ENCODE measurements at regions of chr5 and their contacts with region 1.

Region 1: GRCh38 chr5:56909294-56910209 is at the start of gene SETD9:
- DNase-seq: peak; percentile 90 to 99
- H3K4me3 ChIP-seq: peak within 1 kb of the TSS; percentile 63 to 92
- H3K27ac ChIP-seq: peak within 1 kb of the TSS; percentile 90 to 99
- H3K4me1 ChIP-seq: peaks cover 2 to 6% of the 10 kb centered on the region in 2 donors
- H3K27me3 ChIP-seq: no peaks in the 10 kb centered on the region
- CTCF ChIP-seq: no peak
- total RNA-seq, gene SETD9: 16.8 TPM

Region 2: DNA sequence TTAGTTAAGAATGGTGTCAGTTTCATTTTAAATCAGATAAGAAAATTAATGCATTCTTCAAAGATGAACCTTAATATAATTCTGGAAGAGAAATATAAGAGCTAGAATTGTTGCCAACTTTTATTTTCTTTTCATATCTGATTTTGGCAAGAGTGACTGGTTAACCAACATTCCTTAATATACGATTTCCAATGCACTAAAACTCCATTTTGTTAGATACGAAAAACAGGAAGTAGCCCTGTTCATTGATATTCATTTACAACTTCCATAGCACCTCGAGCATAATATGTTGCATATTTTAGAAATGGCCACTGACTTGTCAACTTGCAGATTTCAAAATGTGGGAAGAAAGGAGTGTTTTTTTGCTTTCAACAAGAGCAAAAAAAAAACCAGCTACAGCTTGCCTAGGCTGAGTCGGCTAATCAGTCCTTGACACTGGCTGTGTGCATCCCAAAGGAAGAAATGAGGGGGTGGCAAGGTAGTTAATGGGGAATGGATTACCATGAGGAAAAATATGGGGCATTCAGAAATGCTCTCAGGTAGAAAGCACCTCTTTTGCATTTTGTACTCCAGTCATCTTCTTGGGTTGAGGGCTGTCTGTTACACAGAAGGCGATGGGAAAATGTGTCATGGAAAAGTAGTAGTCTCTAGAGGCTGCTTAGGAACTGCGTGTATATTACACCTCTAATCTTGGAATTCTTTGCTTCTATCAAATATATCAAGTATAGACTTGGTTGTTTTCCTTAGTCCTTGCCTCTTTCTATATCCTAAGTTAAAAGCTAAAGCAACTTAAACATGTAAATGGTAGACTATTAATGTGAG is 90.3 kb before region 1 on chr5:
- intact Hi-C with region 1: no loop called
- DNase-seq: no peak
- H3K4me3 ChIP-seq: peak overlapping the region; percentile 31 to 34
- H3K27ac ChIP-seq: no peak overlapping the region
- H3K4me1 ChIP-seq: peaks cover 0 to 23% of the 10 kb centered on the region in 2 donors
- H3K27me3 ChIP-seq: no peaks in the 10 kb centered on the region
- CTCF ChIP-seq: no peak

Region 3: DNA sequence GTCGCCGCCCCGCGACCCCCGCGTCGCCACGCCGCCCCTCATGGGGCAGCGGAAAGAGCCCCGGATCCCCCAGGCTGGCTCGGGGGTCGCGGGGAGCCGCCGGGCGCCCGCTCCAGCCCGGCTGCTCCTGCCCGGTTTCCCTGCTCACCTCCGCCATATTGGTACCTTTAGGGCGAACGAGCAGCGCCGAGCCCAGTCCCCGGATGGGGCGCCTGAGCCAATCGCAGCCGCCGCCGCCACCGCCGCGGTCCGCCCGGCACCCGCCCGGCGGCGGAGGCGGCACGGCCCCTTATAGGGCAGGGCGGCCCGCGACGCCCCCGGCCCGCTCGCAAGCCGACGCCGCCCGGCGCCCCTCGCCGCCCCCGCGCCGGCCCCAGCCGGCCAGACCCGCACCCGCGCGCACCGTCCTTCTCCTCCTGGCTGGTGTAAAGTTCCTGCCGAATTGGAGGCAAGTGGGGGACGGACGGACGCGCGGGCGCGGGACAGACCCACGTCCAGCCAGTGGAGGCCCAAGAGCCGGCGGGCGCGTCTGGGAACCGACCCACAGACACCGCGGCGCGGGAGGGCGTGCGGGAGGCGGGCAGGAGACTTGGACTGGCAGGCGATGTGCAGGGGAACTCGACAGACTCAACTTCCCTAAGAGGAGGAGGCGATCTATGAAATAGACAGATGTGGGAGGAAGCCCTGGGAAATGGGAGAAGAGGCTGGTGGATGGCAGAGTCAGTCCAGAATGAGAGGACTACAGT is 42.6 kb after region 1 on chr5 and contains the start of gene MIER3:
- intact Hi-C with region 1: loop called (anchors 1 kb)
- DNase-seq: peak; percentile 12 to 87
- H3K4me3 ChIP-seq: peak within 1 kb of the TSS; percentile 82 to 98
- H3K27ac ChIP-seq: peak within 1 kb of the TSS; percentile 87 to 92
- H3K4me1 ChIP-seq: peaks cover 0 to 2% of the 10 kb centered on the region in 2 donors
- H3K27me3 ChIP-seq: no peaks in the 10 kb centered on the region
- CTCF ChIP-seq: no peak
- total RNA-seq, gene MIER3: 5.5 TPM